ENCODE measurements at regions of chr1 and their contacts with region 1.

Region 1: GRCh38 chr1:175075572-175076568 is 8.2 kb downstream of the TNN start:
- DNase-seq: no peak
- H3K4me3 ChIP-seq: no peak overlapping the region
- H3K27ac ChIP-seq: no peak overlapping the region
- H3K4me1 ChIP-seq: peaks cover 6 to 16% (median 11%) of the 10 kb centered on the region in 4 experiments
- H3K27me3 ChIP-seq: no peaks in the 10 kb centered on the region
- CTCF ChIP-seq: peak in 2 of 3 experiments; percentile 1 to 8; a peak in 2 of 4 replicates
- EP300 ChIP-seq: no peak
- POLR2A ChIP-seq: no peak
- RAD21 ChIP-seq: peak in 1 of 2 experiments; percentile 9; a peak in 1 of 4 replicates

Region 2: DNA sequence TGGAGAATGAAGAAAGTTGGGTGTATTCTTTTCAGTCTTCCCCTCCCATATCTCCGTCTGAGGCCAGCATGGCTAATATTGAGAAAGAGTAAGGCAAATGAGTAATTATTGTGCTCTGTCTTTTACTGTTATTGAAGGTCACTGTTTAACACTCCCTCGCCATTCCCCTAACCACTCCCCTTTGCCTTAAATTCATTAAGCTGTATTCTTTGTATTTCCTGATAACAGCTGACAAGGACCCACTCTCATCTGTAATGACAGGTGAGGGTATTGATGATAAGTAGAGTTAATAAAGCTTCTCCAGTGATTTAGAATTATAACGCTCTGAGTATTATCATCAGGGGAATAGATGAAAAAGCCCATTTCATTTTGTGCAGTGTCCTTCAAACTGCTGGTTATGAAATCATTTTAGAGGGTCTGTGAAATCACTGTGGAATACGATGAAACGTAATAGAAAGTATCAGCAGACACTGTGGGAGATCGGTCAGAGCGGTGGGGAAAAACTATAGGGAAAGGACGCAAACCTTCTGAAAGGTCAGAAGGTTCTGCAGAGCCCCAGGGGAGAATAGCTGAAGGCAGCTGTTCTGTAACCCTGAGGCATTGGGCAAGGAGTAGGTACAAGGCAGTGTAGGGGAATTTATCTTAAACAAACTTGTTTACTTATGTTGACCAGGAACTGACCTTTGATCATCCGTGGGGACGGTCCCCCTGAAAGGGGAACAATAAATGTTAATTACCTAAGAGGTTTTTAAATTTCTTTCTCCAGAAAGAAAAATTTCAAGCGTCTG is 122.4 kb before region 1 on chr1:
- CTCF ChIA-PET with region 1: no interaction called
- POLR2A ChIA-PET with region 1: no interaction called
- DNase-seq: no peak
- H3K4me3 ChIP-seq: no peak overlapping the region
- H3K27ac ChIP-seq: no peak overlapping the region
- H3K4me1 ChIP-seq: peaks cover 0 to 4% (median 1%) of the 10 kb centered on the region in 4 experiments; a peak in 3 of 7 replicates
- H3K27me3 ChIP-seq: no peaks in the 10 kb centered on the region
- CTCF ChIP-seq: no peak
- EP300 ChIP-seq: no peak
- POLR2A ChIP-seq: no peak
- RAD21 ChIP-seq: no peak

Region 3: DNA sequence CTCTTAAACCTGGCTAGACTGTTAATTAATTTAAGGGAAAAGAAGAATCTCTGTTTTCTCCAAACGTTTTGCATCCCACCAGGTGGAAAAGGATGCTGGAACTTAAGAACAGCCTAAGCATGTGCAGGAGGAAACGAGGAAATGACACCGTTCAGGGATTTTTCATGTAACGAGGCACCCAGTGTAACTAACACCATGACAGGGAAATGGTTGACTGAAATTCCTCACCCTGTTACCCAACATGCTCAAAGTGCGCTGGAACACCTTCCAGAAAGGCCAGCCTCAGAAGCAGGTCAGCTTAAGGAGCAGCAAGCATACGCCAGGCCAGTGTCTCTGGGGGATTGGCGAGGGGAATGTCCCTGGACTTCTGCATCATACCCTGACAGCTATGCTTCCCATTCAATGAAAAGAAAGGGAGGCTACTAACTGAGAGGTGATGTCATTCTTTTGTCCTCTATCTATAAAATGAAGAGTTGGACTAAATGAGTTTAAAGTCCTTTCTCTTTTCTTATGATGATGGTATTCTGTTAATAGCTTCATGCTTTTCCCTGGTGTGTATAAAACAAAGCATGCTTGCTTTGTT is 13.4 kb after region 1 on chr1:
- CTCF ChIA-PET with region 1: interaction called, 51 read pairs
- POLR2A ChIA-PET with region 1: interaction called, 8 read pairs
- DNase-seq: no peak
- H3K4me3 ChIP-seq: no peak overlapping the region
- H3K27ac ChIP-seq: no peak overlapping the region
- H3K4me1 ChIP-seq: no peaks in the 10 kb centered on the region
- H3K27me3 ChIP-seq: no peaks in the 10 kb centered on the region
- CTCF ChIP-seq: no peak
- EP300 ChIP-seq: no peak
- POLR2A ChIP-seq: no peak
- RAD21 ChIP-seq: no peak

Region 4: GRCh38 chr1:175118375-175119367 is 42.8 kb after region 1 on chr1:
- CTCF ChIA-PET with region 1: interaction called, 28 read pairs
- POLR2A ChIA-PET with region 1: interaction called, 4 read pairs
- DNase-seq: no peak
- H3K4me3 ChIP-seq: no peak overlapping the region
- H3K27ac ChIP-seq: no peak overlapping the region
- H3K4me1 ChIP-seq: no peaks in the 10 kb centered on the region
- H3K27me3 ChIP-seq: no peaks in the 10 kb centered on the region
- CTCF ChIP-seq: no peak
- EP300 ChIP-seq: no peak
- POLR2A ChIP-seq: no peak
- RAD21 ChIP-seq: no peak

Region 5: GRCh38 chr1:175124861-175125260 is 49.0 kb after region 1 on chr1:
- CTCF ChIA-PET with region 1: interaction called, 28 read pairs
- POLR2A ChIA-PET with region 1: no interaction called
- DNase-seq: no peak
- H3K4me3 ChIP-seq: no peak overlapping the region
- H3K27ac ChIP-seq: no peak overlapping the region
- H3K4me1 ChIP-seq: peaks cover 0 to 8% (median 6%) of the 10 kb centered on the region in 4 experiments; a peak in 4 of 7 replicates
- H3K27me3 ChIP-seq: no peaks in the 10 kb centered on the region
- CTCF ChIP-seq: no peak
- EP300 ChIP-seq: no peak
- POLR2A ChIP-seq: no peak
- RAD21 ChIP-seq: no peak

Region 6: DNA sequence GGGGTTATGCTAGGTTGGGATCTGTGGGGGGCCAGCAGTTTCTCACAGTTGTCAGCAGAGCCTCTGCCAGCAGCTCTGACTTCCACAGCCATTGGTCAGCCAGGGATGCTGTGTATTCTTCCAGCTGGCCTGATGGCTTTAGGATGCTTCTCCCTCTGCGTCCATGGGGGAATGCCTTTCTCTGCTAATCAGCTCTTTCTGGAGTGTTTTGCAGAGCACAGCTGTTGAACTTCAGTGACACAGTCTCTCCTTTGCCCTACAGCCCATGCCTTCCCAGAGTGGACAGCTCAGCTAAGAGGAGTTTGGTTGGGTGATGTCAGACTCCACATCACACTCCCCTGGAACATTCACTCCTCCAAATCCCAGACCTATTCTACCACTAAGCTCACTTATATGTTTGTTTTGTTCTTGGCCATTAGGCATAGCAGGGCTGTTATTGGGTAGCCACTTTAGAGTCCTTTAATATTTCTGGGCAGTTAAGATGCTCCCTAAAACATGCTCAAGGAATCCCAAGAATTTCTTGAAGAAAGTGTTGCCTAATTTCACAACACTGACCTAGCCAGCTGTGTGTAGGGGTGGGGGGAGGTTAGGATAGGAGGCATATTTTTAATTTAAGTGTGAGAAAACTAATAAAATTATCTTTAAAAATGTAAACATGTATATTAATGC is 192.0 kb after region 1 on chr1:
- CTCF ChIA-PET with region 1: no interaction called
- POLR2A ChIA-PET with region 1: no interaction called
- DNase-seq: no peak
- H3K4me3 ChIP-seq: no peak overlapping the region
- H3K27ac ChIP-seq: no peak overlapping the region
- H3K4me1 ChIP-seq: peaks cover 0 to 3% (median 0%) of the 10 kb centered on the region in 4 experiments; a peak in 1 of 7 replicates
- H3K27me3 ChIP-seq: no peaks in the 10 kb centered on the region
- CTCF ChIP-seq: no peak
- EP300 ChIP-seq: no peak
- POLR2A ChIP-seq: no peak
- RAD21 ChIP-seq: no peak

Measured in H1 (cell line).